GM12878 (cell line): ENCODE measurements at regions of chr3 and their contacts with region 1.

Region 1: DNA sequence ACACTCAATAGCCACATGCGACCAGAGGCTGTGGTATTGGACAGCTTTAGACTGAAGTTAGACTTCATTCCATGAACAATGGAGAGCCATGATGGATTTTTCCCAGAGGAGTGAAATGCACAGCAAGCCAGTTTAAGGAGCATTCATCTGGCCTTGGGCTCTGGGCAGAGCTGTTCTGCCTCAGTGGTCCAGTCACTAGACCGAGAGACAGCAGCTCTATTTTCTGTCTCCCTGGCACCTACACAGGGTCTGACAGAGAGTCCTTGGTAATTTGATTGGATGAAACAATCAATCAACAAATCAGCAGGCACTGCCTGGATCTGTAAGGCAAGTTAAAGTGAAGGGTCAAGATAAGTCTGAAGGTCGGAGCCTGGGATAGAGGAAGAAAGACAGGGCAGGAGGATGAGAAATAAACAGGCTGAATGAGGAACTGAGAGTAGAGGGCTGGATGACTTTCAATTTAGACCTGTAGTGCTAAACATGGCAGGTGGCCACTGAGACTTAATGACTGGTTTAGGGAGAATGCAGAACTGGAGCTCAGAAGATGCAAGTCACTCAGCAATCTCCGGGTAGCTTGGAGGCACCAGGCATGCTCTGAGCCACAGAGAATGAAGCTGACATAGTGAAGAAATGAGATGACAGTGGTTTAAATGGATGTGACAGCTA is 98.5 kb upstream of the SLC25A36 start:
- DNase-seq: peak; percentile 86
- ATAC-seq: peak; percentile 96
- H3K4me3 ChIP-seq: 0 out of 2 replicates have a peak overlapping the region, but pooled peaks have one; percentile 23
- H3K27ac ChIP-seq: peak overlapping the region; percentile 64
- H3K4me1 ChIP-seq: peaks cover 27% of the 10 kb centered on the region
- H3K27me3 ChIP-seq: no peaks in the 10 kb centered on the region
- CTCF ChIP-seq: no peak
- EP300 ChIP-seq: peak; percentile 25 to 77; a peak in 1 of 4 replicates
- POLR2A ChIP-seq: no peak
- RAD21 ChIP-seq: no peak

Region 2: GRCh38 chr3:140753865-140754754 is 89.0 kb before region 1 on chr3:
- CTCF ChIA-PET with region 1: interaction called, 4 read pairs
- POLR2A ChIA-PET with region 1: no interaction called
- RAD21 ChIA-PET with region 1: interaction called, 9 read pairs
- SMC1A ChIA-PET with region 1: interaction called, 6 read pairs
- in situ Hi-C with region 1: no loop called
- intact Hi-C with region 1: loop called (anchors 5 kb)
- DNase-seq: peak; percentile 87
- ATAC-seq: peak; percentile 86
- H3K4me3 ChIP-seq: no peak overlapping the region
- H3K27ac ChIP-seq: no peak overlapping the region
- H3K4me1 ChIP-seq: peaks cover 23% of the 10 kb centered on the region
- H3K27me3 ChIP-seq: no peaks in the 10 kb centered on the region
- CTCF ChIP-seq: peak in 2 of 3 experiments; percentile 8 to 19; a peak in 1 of 6 replicates
- EP300 ChIP-seq: peak; percentile 89 to 91
- POLR2A ChIP-seq: no peak
- RAD21 ChIP-seq: peak; percentile 6; the same call in 1 of the 2 replicates

Region 3: DNA sequence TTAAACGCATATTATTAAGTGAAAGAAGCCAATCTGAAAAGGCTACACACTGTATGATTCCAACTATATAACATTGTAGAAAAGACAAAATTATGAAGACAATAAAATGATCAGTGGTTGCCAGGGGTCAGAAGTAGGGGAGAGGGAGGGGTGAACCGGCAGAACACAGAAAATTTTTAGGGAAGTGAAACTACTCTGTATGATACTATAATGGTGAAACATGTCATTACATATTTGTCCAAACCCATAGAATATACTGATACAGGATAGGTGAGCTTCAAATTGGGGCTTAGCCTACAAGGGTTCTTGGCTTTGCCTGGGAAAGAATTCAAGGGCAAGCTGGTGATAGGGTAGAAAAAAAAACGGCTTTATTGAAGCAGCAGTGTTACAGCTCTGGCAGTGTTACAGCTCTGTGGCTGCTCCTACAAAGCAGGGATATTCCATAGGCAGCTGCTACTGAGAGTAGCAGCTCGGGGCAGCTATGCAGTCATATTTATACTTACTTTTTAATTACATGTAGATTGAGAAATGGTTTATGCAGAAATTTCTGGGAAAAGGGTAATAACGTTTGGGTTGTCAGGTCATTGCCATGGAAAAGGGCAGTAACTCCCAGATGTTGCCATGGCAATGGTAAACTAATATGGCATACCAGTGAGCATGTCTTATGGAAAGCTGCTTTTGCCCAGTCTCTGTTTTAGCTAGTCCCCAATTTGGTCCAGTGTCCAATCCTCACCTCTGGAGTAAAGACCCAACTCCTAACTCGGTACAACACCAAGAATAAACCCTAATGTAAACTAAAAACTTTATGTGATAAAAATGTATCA is 26.5 kb before region 1 on chr3:
- CTCF ChIA-PET with region 1: no interaction called
- POLR2A ChIA-PET with region 1: interaction called, 3 read pairs
- RAD21 ChIA-PET with region 1: interaction called, 3 read pairs
- SMC1A ChIA-PET with region 1: interaction called, 11 read pairs
- in situ Hi-C with region 1: no loop called
- intact Hi-C with region 1: no loop called
- DNase-seq: peak; percentile 32
- ATAC-seq: peak; percentile 100
- H3K4me3 ChIP-seq: no peak overlapping the region
- H3K27ac ChIP-seq: no peak overlapping the region
- H3K4me1 ChIP-seq: no peaks in the 10 kb centered on the region
- H3K27me3 ChIP-seq: no peaks in the 10 kb centered on the region
- CTCF ChIP-seq: no peak
- EP300 ChIP-seq: peak in 1 of 2 experiments; percentile 40; a peak in 1 of 4 replicates
- POLR2A ChIP-seq: no peak
- RAD21 ChIP-seq: no peak